ENCODE measurements at regions of chr2 and their contacts with region 1.

Region 1: GRCh38 chr2:20446917-20447436 is at the start of gene RHOB:
- DNase-seq: peak; percentile 100
- CTCF ChIP-seq: no peak

Region 2: DNA sequence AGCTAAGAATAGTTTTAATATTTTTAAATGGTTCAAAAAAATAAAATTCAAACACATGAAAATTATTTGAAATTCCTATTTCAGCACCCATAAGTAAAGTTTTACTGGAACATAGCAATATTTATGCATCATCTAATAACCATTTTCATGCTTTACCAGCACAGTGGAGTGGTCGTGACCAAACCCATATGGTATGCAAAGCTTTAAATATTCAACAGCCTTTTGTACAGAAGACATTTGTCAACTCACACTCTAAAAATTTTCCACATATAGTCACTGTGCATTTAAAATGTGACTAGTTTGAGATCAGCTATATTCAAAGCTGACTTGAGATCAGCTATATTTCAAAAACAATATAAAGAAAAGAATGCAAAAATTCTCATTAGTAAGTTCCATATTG is 142.6 kb before region 1 on chr2:
- CTCF ChIA-PET with region 1: no interaction called
- POLR2A ChIA-PET with region 1: no interaction called
- DNase-seq: no peak
- CTCF ChIP-seq: no peak

Region 3: GRCh38 chr2:20424300-20425290 is 22.4 kb before region 1 on chr2:
- CTCF ChIA-PET with region 1: interaction called, 28 read pairs
- POLR2A ChIA-PET with region 1: interaction called, 91 read pairs
- DNase-seq: peak; percentile 64
- CTCF ChIP-seq: no peak

Region 4: DNA sequence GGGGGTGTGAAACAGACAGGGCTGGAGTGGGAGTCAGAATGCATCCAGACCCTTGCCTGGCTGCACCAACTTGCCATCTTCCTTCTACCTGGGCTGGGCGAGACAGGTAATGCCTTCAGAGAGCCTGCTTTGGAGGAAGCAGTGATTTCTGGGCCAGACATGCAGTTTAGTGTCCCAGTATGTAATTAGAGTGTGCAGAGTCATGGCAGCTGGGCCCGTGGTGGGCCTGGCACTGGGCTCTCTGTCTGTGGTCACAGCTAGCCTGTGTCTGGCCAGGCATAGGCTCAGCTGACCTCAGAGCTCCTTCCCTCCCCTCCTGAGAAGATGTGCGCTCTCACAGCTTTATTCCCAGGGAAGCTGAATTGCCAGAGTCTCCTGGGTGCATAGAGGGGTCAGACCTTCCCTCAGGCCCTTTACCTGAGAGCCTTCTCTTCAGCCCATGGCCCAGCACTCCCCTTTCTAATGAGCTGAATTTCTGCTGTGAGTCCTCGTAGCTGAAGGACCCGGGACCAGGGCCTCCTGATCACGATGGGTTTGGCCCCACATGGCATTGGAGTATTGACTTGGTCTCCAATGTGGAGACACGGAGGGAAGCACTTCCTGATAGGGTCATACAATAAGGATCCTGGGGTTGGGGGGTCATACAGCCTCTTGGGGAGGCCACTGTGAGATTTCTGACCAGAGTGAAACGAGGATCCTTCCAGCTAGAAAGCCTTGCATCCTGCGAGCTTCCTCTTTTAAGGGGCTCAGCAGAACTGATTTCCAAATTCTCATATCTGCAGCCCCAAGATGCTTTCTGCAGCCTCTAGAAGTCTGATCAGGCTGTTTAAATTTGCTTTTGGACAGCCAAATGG is 38.5 kb after region 1 on chr2:
- CTCF ChIA-PET with region 1: interaction called, 4 read pairs
- POLR2A ChIA-PET with region 1: interaction called, 14 read pairs
- DNase-seq: no peak
- CTCF ChIP-seq: no peak

Region 5: GRCh38 chr2:20516646-20517341 is 69.8 kb after region 1 on chr2:
- CTCF ChIA-PET with region 1: no interaction called
- POLR2A ChIA-PET with region 1: interaction called, 56 read pairs
- DNase-seq: peak; percentile 71
- CTCF ChIP-seq: no peak

Region 6: GRCh38 chr2:20578895-20579825 is 132.2 kb after region 1 on chr2:
- CTCF ChIA-PET with region 1: interaction called, 5 read pairs
- POLR2A ChIA-PET with region 1: interaction called, 30 read pairs
- DNase-seq: peak; percentile 75
- CTCF ChIP-seq: no peak

Region 7: GRCh38 chr2:20635675-20636584 is 189.0 kb after region 1 on chr2:
- CTCF ChIA-PET with region 1: interaction called, 101 read pairs
- POLR2A ChIA-PET with region 1: interaction called, 35 read pairs
- DNase-seq: peak; percentile 83
- CTCF ChIP-seq: peak; percentile 95

Region 8: DNA sequence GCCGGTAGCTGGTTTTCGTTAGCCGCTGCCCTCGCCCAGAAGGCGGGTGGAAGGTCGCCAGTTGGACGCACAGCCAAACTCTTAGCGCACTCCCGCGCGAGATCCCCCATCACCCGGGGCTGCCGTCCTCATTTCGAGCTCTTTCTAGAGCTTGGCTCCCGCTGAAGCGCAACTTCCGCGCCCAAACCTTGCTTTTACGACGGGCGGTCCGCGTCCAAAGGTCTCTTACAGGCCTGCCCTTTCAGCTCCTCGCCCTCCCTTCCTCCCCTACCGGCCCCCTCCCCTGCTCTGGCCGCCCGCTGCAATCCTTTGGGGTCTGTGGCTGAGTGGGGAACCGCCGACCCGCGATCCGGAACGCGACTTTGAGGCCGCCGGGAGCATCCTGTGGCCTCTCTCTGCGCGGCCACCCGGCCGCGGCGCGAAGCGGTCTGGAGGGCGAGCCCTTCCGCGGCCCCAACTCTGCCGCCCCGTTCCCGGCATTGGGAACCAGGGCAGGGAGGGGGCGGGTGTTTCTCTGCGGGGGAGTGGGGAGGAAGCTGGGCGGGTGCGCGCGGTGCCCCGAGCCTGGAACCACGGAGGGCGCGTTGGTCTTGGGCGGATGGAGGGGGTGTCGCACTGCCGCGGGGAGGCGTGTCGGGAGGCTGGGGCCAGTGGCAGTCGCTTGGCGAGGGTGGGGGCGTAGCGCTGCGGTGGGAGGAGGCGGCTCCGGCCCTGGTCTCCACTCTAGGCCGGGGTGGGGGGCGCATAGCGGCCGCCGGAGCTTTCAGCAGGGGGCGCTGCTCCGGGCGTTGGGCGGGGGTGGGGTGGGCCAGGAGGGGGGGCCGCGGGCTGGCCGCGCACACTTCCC is 219.6 kb after region 1 on chr2 and contains the start of gene GDF7:
- CTCF ChIA-PET with region 1: interaction called, 10 read pairs
- POLR2A ChIA-PET with region 1: interaction called, 14 read pairs
- DNase-seq: no peak
- CTCF ChIP-seq: peak; percentile 8

Measured in GM10248 (cell line).